Brain microvascular endothelial cell (primary cell): ENCODE measurements at regions of chr12 and their contacts with region 1.

Region 1: GRCh38 chr12:45183246-45183645 is 32.6 kb upstream of the ANO6 start:
- DNase-seq: no peak
- H3K4me3 ChIP-seq: no peak overlapping the region
- H3K27ac ChIP-seq: no peak overlapping the region
- H3K27me3 ChIP-seq: no peaks in the 10 kb centered on the region
- CTCF ChIP-seq: peak; percentile 24

Region 2: GRCh38 chr12:44976246-44976645 is 207.0 kb before region 1 on chr12:
- in situ Hi-C with region 1: no loop called
- DNase-seq: no peak
- H3K4me3 ChIP-seq: no peak overlapping the region
- H3K27ac ChIP-seq: no peak overlapping the region
- H3K27me3 ChIP-seq: no peaks in the 10 kb centered on the region
- CTCF ChIP-seq: no peak

Region 3: DNA sequence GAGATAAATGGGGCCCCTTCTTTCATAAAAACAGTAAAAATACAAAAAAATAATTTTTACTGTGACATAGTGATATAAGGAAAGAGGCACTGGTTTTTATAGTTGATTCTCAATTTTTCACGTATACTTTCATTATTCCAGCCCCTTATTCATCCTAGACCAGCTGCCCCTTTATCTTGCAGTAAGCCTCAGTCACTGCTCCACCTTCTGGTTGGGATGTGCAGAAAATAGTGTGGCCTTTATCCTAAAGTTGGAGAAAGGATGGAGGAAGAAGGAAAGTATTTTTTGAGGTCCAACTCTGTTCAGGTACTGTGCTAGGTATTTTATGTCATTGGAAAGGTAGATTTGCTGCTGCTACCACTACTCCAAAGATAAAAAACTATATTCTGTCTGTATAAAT is 205.3 kb after region 1 on chr12:
- in situ Hi-C with region 1: loop called (anchors 25 kb)
- DNase-seq: peak; percentile 39
- H3K4me3 ChIP-seq: no peak overlapping the region
- H3K27ac ChIP-seq: no peak overlapping the region
- H3K27me3 ChIP-seq: no peaks in the 10 kb centered on the region
- CTCF ChIP-seq: peak; percentile 82